Mucosa of descending colon (tissue), 3 donors: ENCODE measurements at regions of chr7 and their contacts with region 1.

Region 1: GRCh38 chr7:100894860-100895421 is 747 bp downstream of the ACHE start:
- DNase-seq: peak; percentile 67 to 75 (median 68)
- ATAC-seq: no peak
- H3K4me3 ChIP-seq: no peak overlapping the region
- H3K4me1 ChIP-seq: peaks cover 42% of the 10 kb centered on the region
- CTCF ChIP-seq: peak; percentile 69

Region 2: GRCh38 chr7:100965723-100966541 is 71.0 kb after region 1 on chr7:
- intact Hi-C with region 1: loop called in 1 of 2 experiments (anchors 5 kb)
- DNase-seq: peak; percentile 89 to 98 (median 94)
- ATAC-seq: peak; percentile 74
- H3K4me3 ChIP-seq: peak overlapping the region; percentile 27
- H3K4me1 ChIP-seq: peaks cover 6% of the 10 kb centered on the region
- CTCF ChIP-seq: peak; percentile 98

Region 3: DNA sequence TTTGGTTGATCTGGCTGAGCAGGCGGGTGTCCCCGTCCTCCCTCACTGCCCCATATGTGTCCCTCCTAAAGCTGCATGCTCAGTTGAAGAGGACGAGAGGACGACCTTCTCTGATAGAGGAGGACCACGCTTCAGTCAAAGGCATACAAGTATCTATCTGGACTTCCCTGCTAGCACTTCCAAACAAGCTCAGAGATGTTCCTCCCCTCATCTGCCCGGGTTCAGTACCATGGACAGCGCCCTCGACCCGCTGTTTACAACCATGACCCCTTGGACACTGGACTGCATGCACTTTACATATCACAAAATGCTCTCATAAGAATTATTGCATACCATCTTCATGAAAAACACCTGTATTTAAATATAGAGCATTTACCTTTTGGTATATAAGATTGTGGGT is 163.4 kb after region 1 on chr7:
- intact Hi-C with region 1: loop called (anchors 5 kb)
- DNase-seq: peak in 2 of 3 donors; percentile 64 to 70
- ATAC-seq: peak; percentile 38
- H3K4me3 ChIP-seq: no peak overlapping the region
- H3K4me1 ChIP-seq: no peaks in the 10 kb centered on the region
- CTCF ChIP-seq: no peak

Region 4: DNA sequence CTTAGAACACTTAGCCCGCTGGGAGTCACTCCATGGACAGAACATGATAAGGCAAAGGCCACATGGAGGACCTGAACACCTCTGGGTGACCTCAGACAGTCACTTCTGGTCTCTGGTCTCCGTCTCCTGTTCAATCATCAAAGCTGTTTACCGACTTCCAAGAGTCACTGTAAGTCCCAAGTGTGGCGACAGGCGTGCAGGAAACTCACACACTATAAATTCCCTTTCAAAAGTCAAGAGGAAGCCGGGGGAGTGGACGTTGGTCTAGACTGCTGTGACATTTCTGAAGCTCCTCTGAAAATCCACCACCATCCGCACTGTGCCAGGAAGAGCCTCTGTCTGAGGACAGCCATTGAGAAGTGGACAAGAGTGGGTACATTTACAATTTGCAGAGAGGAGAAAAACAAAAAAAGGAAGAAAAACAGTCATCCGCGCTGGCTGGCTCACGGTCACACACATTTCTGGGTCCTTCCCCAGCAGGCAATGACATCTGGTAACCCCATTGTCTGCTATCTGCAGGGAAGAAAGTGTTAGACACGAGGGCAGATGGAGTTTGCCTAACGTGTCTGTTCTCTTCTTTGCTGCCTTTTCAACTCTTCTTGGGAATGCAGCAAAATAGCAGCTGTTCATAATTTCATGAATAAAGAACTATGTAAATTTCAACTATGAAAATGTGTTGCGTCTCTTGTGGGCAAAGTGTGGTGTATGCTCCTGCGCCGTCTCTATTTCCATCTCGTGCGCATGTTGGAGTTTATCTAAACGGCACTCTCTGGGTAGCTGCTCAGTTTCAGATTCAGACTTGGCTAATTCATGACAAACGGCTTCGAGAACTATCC is 889.6 kb after region 1 on chr7:
- intact Hi-C with region 1: no loop called
- DNase-seq: no peak
- ATAC-seq: peak; percentile 57
- H3K4me3 ChIP-seq: no peak overlapping the region
- H3K4me1 ChIP-seq: no peaks in the 10 kb centered on the region
- CTCF ChIP-seq: no peak